ENCODE measurements at regions of chr1 and their contacts with region 1.

Region 1: DNA sequence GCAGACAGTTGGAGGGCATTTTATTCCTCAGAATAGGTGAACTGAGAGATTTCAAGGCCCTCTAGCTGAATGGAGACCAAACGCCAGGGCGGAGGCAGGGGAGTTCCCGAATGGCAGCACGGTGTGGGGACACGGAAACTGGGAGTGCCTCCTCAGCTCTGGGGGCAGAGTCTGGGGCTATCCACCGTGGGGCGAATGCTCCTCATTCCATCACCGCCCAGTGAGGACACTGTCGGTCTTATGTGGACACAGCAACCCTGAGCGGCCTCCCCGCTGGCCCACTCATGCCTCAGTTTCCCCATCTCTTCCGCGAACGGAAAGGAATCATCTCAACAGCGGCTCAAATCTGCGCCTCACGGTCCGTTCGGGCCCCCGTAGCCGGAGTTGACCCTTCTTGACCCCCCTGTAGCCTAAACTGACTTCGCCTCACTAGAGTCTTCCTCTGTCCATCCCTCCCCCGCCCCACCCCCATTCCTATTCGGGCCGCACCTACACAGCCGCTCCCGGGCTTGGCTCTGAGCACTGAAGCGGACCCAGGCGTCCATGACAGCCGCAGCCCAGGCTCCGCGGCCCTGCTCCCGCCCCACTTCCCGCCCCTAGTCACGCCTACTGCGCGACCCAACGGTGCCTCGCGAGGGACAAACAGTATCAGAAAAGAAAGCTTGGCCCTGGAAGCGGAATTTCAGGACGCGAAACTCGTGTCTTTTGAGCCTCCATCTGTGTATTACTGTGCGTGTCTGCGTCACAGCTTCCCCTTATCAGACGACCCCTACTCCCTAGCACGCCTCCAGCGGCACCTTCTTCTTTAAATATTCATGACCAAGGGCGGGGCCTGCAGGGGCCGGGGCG is at the start of gene PEX11B:
- DNase-seq: peak; percentile 96
- total RNA-seq, gene PEX11B: 17.4 TPM

Region 2: GRCh38 chr1:145845514-145846161 is 72.7 kb before region 1 on chr1 and contains the start of gene NUDT17:
- intact Hi-C with region 1: loop called (anchors 5 kb)
- DNase-seq: peak; percentile 91
- total RNA-seq, gene NUDT17: 2.7 TPM

Region 3: DNA sequence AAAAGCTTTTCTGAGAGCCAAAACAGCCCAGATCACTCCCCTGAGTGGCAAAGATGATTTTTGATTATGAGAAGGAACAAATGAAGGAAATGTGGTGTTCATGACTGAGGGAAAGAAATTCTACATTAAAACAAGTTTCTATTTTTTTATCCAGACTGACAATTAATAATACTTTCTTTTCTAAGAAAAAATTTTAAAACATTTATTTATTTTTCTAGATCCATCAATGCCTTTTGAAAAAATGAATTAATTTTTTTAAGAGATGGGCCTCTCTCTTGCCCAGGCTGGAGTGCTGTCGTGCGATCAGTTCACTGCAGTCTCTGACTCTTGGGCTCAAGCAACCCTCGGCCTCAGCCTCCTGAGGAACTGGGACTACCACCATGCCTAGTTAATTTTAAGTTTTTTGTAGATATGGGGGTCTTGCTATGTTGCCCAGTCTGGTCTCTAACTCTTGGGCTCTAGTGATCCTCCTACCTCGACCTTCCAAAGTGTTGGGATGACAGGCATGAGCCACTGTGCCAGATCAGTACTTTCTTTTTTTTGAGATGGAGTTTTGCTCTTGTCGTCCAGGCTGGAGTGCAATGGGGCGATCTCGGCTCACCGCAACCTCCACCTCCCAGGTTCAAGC is 89.3 kb after region 1 on chr1:
- intact Hi-C with region 1: loop called (anchors 5 kb)
- DNase-seq: no peak

Measured in cardiac septum (tissue), 1 donor.